ENCODE measurements at regions of chr3 and their contacts with region 1.

Region 1: DNA sequence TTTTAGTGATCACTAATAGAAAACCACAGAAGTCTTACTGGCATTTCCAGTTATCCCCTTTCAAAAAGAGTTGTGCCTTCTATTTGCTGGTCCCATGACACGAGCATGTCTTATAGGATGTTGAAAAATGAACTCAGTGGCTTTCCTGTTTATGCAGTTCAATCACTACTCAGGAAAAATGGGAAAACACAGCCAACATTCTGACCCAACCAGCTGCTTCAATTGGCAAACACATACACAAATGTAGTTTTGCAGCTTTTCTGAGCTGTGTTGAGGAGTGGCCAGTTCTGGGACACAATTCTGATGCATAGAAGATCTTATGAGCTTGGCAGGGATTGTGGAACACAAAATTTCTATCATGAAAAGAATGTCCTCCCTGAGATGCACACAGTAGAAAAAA is 40.3 kb downstream of the FSTL1 start:
- DNase-seq: no peak
- ATAC-seq: no peak
- H3K4me3 ChIP-seq: no peak overlapping the region
- H3K27ac ChIP-seq: no peak overlapping the region
- H3K4me1 ChIP-seq: no peaks in the 10 kb centered on the region
- H3K27me3 ChIP-seq: no peaks in the 10 kb centered on the region
- CTCF ChIP-seq: no peak

Region 2: GRCh38 chr3:120245386-120245785 is 165.2 kb before region 1 on chr3:
- intact Hi-C with region 1: loop called in 2 of 3 experiments (anchors 5 kb)
- DNase-seq: no peak
- ATAC-seq: no peak
- H3K4me3 ChIP-seq: no peak overlapping the region
- H3K27ac ChIP-seq: no peak overlapping the region
- H3K4me1 ChIP-seq: no peaks in the 10 kb centered on the region
- H3K27me3 ChIP-seq: peaks cover 0 to 11% (median 0%) of the 10 kb centered on the region in 4 donors
- CTCF ChIP-seq: no peak

Region 3: DNA sequence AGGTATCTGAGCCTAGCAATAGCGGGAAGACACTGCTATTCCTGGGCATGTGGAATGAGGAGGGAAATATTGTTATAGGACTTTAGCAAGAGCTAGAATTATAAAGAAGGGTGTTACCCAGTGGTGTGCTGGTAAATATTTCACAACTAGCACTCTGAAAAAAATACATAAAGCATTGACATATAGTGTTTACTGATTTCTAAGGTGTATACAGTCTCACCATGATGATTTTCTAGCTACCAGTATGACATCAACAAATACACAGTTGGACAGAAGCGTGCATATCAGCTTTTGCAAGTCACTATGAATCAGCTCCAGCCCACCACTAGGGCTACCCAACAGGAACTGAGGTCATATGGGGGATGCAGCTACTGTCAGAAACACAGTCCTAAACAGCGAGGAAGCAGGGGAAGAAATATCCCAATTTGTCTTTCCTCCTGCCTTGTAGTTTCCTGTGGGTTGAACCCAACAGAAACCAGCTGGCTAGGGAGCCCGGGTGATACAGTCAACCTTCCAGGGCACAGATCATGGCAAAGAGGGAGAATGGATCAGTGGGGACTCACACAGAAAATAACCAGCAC is 231.9 kb after region 1 on chr3:
- intact Hi-C with region 1: no loop called
- DNase-seq: no peak
- ATAC-seq: no peak
- H3K4me3 ChIP-seq: no peak overlapping the region
- H3K27ac ChIP-seq: no peak overlapping the region
- H3K4me1 ChIP-seq: no peaks in the 10 kb centered on the region
- H3K27me3 ChIP-seq: no peaks in the 10 kb centered on the region
- CTCF ChIP-seq: no peak

Region 4: DNA sequence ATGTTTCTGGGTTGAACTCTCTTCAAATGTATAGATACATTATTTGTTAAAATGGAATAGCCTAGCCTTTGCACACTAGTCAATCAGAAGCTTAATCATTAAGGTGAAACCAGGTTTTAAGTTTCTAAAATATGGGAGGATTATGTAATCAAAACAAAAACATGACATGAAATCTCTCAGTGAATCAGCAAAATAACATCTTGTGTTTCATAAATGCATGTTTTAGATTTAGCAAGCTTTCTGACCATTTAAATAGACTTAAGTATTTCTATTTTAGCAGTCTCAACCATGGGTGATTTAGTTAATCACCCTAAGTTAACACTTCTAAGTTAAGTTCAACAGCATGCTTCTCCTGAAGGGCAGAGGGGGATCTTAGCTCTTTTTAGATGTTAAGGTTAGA is 343.3 kb after region 1 on chr3:
- intact Hi-C with region 1: no loop called
- DNase-seq: no peak
- ATAC-seq: no peak
- H3K4me3 ChIP-seq: no peak overlapping the region
- H3K27ac ChIP-seq: no peak overlapping the region
- H3K4me1 ChIP-seq: no peaks in the 10 kb centered on the region
- H3K27me3 ChIP-seq: no peaks in the 10 kb centered on the region
- CTCF ChIP-seq: no peak

Region 5: DNA sequence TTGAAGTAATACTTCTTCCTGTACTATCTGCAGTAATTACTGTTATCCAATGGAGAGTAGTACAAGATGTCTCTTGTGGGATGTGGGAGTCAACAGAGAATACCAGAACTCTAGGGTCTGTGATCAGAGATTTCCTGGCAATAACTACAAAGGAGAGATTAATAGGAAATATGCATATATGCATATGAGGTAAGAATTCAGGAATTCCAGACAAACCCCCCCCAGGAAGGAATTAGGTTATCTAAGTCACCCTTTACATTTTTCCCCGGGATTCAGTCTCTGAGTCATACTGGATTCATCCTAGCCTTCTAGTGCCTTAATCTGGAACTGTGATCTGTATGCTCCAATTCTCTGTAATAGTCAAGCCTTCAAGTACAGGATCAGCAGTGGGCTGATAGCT is 381.4 kb after region 1 on chr3:
- intact Hi-C with region 1: no loop called
- DNase-seq: no peak
- ATAC-seq: no peak
- H3K4me3 ChIP-seq: no peak overlapping the region
- H3K27ac ChIP-seq: no peak overlapping the region
- H3K4me1 ChIP-seq: no peaks in the 10 kb centered on the region
- H3K27me3 ChIP-seq: no peaks in the 10 kb centered on the region
- CTCF ChIP-seq: no peak